Stomach (tissue), 19 donors: ENCODE measurements at regions of chr6 and their contacts with region 1.

Region 1: GRCh38 chr6:137094411-137095008 is 49.7 kb upstream of the IL20RA start:
- DNase-seq: peak; percentile 47 to 88
- H3K4me3 ChIP-seq: no peak overlapping the region
- H3K27ac ChIP-seq: no peak overlapping the region
- H3K4me1 ChIP-seq: no peaks in the 10 kb centered on the region
- H3K27me3 ChIP-seq: peaks cover 0 to 8% (median 0%) of the 10 kb centered on the region in 3 donors
- CTCF ChIP-seq: peak in 5 of 7 experiments; percentile 41 to 74 (median 53)
- EP300 ChIP-seq: no peak
- POLR2A ChIP-seq: no peak

Region 2: DNA sequence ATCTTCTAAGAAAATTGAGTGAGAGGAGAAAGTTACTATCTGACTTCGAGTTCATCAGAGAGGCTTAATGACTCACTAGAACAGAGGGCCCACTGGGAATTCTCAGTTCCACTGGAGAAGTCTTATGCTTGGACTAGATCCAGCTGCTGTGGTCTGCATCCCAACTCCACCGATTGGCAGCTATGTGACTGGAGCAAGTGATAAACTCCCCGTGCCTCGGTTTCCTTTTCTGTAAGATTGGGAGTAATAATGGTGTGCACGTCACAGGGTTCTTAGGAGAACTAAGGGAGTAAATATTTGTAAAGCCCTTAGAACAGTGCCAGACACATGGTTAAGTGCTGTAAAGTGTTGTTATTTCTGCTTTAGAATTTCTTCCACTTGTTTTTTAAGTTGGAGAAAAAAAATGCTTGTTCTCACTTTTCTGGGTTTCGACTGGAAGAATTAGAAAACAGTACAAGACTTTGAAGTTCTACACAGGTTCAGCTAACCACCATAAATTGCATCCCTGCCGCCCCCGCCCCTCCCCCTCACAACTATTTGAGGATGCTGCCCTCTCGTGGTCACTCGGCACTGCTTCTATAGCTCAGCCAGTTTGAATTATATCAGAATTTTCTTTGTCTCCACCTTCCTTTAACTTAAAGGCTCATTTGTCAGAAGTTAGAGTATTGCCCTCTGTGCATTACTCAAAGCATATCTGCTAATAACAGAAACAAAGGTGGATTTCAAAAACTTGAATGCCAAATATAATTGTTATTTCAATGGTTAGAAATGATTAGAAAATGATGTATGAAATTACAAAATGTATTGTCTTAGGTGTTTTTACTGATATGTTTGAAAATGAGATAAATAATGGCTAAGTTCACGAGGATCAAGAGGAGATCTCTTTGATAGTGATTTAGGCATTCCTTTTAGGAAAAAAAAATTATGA is 219.7 kb after region 1 on chr6:
- intact Hi-C with region 1: loop called (anchors 10 kb)
- DNase-seq: peak; percentile 72 to 88
- H3K4me3 ChIP-seq: no peak overlapping the region
- H3K27ac ChIP-seq: no peak overlapping the region
- H3K4me1 ChIP-seq: peaks cover 0 to 19% (median 9%) of the 10 kb centered on the region in 4 donors
- H3K27me3 ChIP-seq: no peaks in the 10 kb centered on the region
- CTCF ChIP-seq: peak in 5 of 7 experiments; percentile 40 to 88 (median 83)
- EP300 ChIP-seq: no peak
- POLR2A ChIP-seq: no peak